ENCODE measurements at regions of chr12 and their contacts with region 1.

Region 1: DNA sequence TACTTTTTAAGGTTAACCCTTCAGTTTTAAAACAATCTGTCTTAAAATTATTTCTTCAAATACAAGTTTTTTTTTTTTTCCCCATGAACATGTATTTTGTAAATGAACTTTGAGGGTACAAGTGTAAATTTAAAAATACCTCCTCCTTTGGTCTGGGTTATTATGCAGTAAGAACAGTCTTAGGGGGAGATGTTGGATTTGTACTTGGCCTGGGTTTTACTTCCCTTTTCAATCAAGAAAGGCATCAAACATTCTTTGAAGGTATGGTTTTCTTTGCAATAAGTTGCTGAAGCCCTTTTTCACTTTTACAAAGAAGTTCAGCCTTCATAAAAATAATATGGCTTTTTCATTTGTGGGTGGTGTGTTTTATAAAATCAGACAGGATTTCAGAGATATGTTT is 20.5 kb downstream of the WBP11 start:
- DNase-seq: no peak
- CTCF ChIP-seq: no peak

Region 2: GRCh38 chr12:14795028-14795448 is 12.3 kb after region 1 on chr12:
- CTCF ChIA-PET with region 1: interaction called, 11 read pairs
- POLR2A ChIA-PET with region 1: interaction called, 3 read pairs
- DNase-seq: no peak
- CTCF ChIP-seq: no peak